AG04449 (cell line): ENCODE measurements at regions of chrX and their contacts with region 1.

Region 1: GRCh38 chrX:31658360-31658759 is 586.5 kb upstream of the FTHL17 start:
- DNase-seq: peak; percentile 0
- H3K4me3 ChIP-seq: no peak overlapping the region
- CTCF ChIP-seq: peak; percentile 7

Region 2: GRCh38 chrX:31036895-31037294 is 621.5 kb before region 1 on chrX:
- CTCF ChIA-PET with region 1: interaction called, 171 read pairs
- POLR2A ChIA-PET with region 1: no interaction called
- DNase-seq: peak; percentile 2
- H3K4me3 ChIP-seq: no peak overlapping the region
- CTCF ChIP-seq: peak; percentile 59

Region 3: DNA sequence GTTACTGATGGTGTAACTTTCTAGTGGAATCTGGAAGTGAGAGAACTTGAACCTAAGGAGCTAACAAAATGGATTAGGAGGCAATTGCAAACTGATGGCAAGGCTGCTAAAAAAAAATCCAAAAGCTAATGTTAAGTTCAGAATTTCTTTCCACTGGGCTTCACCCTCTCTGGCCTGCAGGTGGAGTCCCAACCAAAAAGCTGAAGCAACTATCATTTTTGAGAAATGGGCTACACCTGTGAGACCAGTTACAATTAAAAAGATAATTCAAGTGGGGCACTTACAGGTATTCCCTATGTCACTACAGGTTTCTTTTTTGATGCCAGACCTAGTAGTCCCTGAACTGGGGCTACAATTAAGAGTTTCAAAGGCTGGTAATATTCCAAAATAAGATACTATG is 444.4 kb before region 1 on chrX:
- CTCF ChIA-PET with region 1: interaction called, 24 read pairs
- POLR2A ChIA-PET with region 1: no interaction called
- DNase-seq: no peak
- H3K4me3 ChIP-seq: no peak overlapping the region
- CTCF ChIP-seq: peak; percentile 41

Region 4: GRCh38 chrX:31423609-31424189 is 234.7 kb before region 1 on chrX:
- CTCF ChIA-PET with region 1: interaction called, 21 read pairs
- POLR2A ChIA-PET with region 1: no interaction called
- DNase-seq: no peak
- H3K4me3 ChIP-seq: no peak overlapping the region
- CTCF ChIP-seq: peak; percentile 20

Region 5: GRCh38 chrX:31497086-31497485 is 161.3 kb before region 1 on chrX:
- CTCF ChIA-PET with region 1: no interaction called
- POLR2A ChIA-PET with region 1: no interaction called
- DNase-seq: no peak
- H3K4me3 ChIP-seq: no peak overlapping the region
- CTCF ChIP-seq: no peak

Region 6: GRCh38 chrX:31523884-31524536 is 134.3 kb before region 1 on chrX:
- CTCF ChIA-PET with region 1: no interaction called
- POLR2A ChIA-PET with region 1: no interaction called
- DNase-seq: no peak
- H3K4me3 ChIP-seq: no peak overlapping the region
- CTCF ChIP-seq: no peak